A549 (cell line): ENCODE measurements at regions of chr9 and their contacts with region 1.

Region 1: DNA sequence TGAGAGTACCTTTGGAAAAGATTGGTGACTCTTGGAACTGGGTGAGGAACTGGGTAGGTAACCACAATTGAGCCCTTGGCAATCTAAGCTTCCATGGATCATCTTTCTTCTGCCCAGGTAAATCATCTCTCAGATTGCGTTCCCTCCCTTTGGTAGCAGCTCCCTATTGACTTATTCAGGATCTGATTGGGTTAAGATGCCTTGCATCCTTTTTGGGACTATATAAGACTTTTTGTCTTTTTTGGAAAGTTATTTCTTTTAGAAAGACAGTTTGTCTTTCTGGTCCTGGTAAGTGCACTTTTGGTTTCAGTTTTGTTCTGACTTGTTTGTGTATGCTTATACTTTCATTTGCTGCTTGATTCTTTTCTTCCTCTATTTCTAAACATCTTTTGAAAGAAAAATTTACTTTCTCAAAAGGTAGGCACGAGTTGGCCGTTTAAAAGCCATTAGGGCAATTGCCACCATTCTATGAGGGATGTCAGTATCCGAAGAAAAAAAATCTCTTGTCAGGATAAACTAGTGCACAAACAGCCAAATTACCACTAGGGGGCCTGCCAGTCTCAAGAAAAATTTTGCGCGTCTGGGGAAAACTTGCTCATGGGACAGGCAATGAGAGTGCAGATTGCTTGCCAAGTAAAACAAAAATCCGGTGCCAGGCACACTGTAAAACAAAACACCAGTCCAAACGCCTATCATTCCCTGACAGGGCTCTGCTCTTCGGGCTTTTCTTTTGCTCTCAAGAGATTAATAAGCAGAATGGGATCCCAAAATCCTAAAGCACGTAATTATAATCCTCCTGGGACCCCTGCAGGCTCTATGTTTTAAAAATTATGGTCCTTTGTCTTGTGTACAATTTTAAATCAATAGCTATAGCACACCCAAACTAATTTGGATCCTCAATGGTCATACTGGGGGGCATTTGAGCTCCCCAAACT is 12.8 kb downstream of the OR1J1 start:
- DNase-seq: peak; percentile 68 to 84
- ATAC-seq: peak; percentile 89 to 96
- H3K4me3 ChIP-seq: peak overlapping the region; percentile 29
- H3K27ac ChIP-seq: 0 out of 6 replicates have a peak overlapping the region, but pooled peaks of 1 of the 2 experiments have one; percentile 22
- H3K4me1 ChIP-seq: 0 out of 3 replicates have a peak, but pooled peaks cover 9% of the 10 kb centered on the region
- CTCF ChIP-seq: peak; percentile 93
- EP300 ChIP-seq: no peak
- POLR2A ChIP-seq: no peak
- RAD21 ChIP-seq: peak; percentile 90 to 93

Region 2: GRCh38 chr9:122475717-122476116 is 10.8 kb after region 1 on chr9:
- CTCF ChIA-PET with region 1: interaction called, 16 read pairs
- POLR2A ChIA-PET with region 1: no interaction called
- DNase-seq: no peak
- ATAC-seq: no peak
- H3K4me3 ChIP-seq: no peak overlapping the region
- H3K27ac ChIP-seq: no peak overlapping the region
- H3K4me1 ChIP-seq: no peaks in the 10 kb centered on the region
- CTCF ChIP-seq: no peak
- EP300 ChIP-seq: no peak
- POLR2A ChIP-seq: no peak
- RAD21 ChIP-seq: no peak

Region 3: GRCh38 chr9:122510502-122510901 is 45.6 kb after region 1 on chr9 and contains the start of gene OR1J2:
- CTCF ChIA-PET with region 1: no interaction called
- POLR2A ChIA-PET with region 1: no interaction called
- DNase-seq: no peak
- ATAC-seq: no peak
- H3K4me3 ChIP-seq: no peak within 1 kb of the TSS
- H3K27ac ChIP-seq: no peak within 1 kb of the TSS
- H3K4me1 ChIP-seq: no peaks in the 10 kb centered on the region
- CTCF ChIP-seq: no peak
- EP300 ChIP-seq: no peak
- POLR2A ChIP-seq: no peak
- RAD21 ChIP-seq: no peak
- polyA plus RNA-seq, gene OR1J2: 0.17 and 0.21 TPM in 2 replicates

Region 4: DNA sequence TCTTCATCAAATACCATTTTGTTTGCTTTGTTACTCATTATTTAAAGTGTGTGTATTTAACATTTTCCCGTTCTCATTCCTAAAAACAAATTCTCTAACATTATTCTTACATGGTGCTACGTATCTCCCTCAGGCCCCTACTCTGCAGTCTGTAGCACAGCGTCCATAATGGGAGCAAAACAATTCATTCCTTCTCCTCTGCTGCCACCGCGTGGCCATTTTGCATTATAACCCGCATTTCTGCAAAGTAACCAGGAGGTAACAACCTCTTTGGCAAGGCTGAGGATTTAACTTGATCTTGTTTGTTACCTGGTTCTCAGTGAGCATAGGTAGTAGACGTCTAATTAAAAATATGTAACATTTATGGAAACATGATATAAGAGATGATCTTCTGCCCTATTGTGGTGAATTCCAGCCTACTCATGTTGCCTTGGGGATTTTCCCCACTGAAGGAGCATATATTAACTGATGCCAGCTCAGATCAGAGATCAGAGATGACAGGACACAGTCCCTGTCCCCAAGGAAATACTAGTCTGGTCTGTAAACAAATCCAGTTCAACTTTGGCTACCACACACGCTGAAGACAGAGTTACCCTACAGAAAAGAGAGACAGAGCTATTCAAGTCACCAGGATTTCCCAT is 345.5 kb after region 1 on chr9:
- CTCF ChIA-PET with region 1: interaction called, 108 read pairs
- POLR2A ChIA-PET with region 1: no interaction called
- DNase-seq: peak; percentile 78 to 82
- ATAC-seq: peak; percentile 91 to 97
- H3K4me3 ChIP-seq: no peak overlapping the region
- H3K27ac ChIP-seq: no peak overlapping the region
- H3K4me1 ChIP-seq: 0 out of 3 replicates have a peak, but pooled peaks cover 4% of the 10 kb centered on the region
- CTCF ChIP-seq: peak; percentile 91
- EP300 ChIP-seq: no peak
- POLR2A ChIP-seq: no peak
- RAD21 ChIP-seq: peak; percentile 96 to 98